Posterior vena cava (tissue), 2 donors: ENCODE measurements at regions of chr5 and their contacts with region 1.

Region 1: DNA sequence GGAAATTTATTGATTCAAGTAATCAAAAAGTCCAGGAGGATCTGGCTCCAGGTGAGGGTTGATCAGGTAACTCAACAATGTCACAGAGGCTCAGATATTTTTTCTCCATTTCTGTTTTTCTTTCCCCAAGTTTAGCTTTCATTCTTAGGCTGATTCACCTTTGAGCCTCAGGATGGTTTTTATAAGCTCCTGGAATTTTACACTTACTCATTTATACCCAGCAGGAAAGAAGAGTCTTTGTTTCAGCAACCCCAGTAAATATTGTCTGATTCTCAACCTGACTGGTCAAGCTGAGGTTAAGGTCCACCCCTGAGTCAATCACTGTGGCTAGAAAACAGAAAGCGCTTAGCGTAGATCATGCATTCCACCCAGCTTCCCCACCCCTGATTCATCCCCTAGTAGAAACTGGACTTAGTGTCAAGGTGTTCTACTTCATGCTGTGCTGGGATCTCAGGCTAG is 500.6 kb downstream of the KIF4B start:
- DNase-seq: no peak

Region 2: DNA sequence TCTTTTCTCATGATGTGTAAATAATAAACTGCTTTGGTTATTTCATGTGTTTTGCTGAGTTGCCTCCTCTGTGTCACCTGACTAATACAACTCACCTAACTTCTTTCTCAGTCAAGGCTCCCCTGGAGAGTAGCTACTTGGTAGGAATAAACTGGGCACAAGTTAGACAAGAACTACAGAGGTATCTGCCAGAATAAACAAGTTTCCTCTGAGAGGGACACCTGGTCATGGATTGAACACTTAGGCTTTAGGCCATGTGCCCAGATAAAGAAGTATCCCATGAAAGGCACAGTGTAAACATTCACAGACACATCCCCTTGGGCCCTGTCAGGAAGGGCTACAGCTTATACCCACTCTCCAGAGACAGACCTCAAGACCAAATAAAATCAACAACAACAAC is 31.9 kb after region 1 on chr5:
- intact Hi-C with region 1: loop called in 1 of 2 experiments (anchors 1 kb)
- DNase-seq: no peak